ENCODE measurements at regions of chr10 and their contacts with region 1.

Region 1: GRCh38 chr10:91251430-91252056 is 31.1 kb downstream of the PCGF5 start:
- DNase-seq: peak; percentile 40 to 56
- ATAC-seq: peak; percentile 59 to 70; a peak in 3 of 6 replicates
- H3K4me3 ChIP-seq: no peak overlapping the region
- H3K27ac ChIP-seq: no peak overlapping the region
- H3K4me1 ChIP-seq: peaks cover 5% of the 10 kb centered on the region; the same call in 1 of the 3 replicates
- CTCF ChIP-seq: peak; percentile 97
- EP300 ChIP-seq: no peak
- POLR2A ChIP-seq: no peak
- RAD21 ChIP-seq: peak; percentile 97

Region 2: DNA sequence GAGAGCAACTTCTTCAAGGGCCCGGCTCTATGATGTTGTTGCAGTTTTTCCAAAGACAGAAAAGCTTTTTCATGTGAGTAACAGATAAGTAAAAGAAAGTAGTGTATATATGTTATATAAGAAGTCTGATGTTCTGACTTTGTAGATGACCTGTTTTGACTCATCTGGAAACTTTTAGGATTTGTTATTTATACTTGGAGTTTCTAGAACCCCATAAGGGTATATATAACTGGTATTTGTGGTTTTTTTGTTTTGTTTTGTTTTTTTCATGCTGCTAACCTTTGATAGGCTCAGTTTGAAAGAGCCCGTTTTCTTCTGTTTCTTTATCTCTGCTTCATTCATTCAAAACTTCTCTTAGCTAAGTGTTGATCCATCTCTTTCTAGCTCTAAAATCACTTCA is 372.5 kb before region 1 on chr10:
- CTCF ChIA-PET with region 1: interaction called, 13 read pairs
- POLR2A ChIA-PET with region 1: no interaction called
- DNase-seq: no peak
- ATAC-seq: no peak
- H3K4me3 ChIP-seq: no peak overlapping the region
- H3K27ac ChIP-seq: no peak overlapping the region
- H3K4me1 ChIP-seq: no peaks in the 10 kb centered on the region
- CTCF ChIP-seq: no peak
- EP300 ChIP-seq: no peak
- POLR2A ChIP-seq: no peak
- RAD21 ChIP-seq: no peak

Region 3: GRCh38 chr10:90905925-90906324 is 345.6 kb before region 1 on chr10:
- CTCF ChIA-PET with region 1: interaction called, 57 read pairs
- POLR2A ChIA-PET with region 1: no interaction called
- DNase-seq: no peak
- ATAC-seq: no peak
- H3K4me3 ChIP-seq: no peak overlapping the region
- H3K27ac ChIP-seq: no peak overlapping the region
- H3K4me1 ChIP-seq: no peaks in the 10 kb centered on the region
- CTCF ChIP-seq: no peak
- EP300 ChIP-seq: no peak
- POLR2A ChIP-seq: no peak
- RAD21 ChIP-seq: no peak

Region 4: GRCh38 chr10:91006001-91006751 is 245.4 kb before region 1 on chr10:
- CTCF ChIA-PET with region 1: interaction called, 28 read pairs
- POLR2A ChIA-PET with region 1: interaction called, 7 read pairs
- DNase-seq: peak; percentile 33 to 76
- ATAC-seq: peak; percentile 74 to 84; a peak in 5 of 6 replicates
- H3K4me3 ChIP-seq: no peak overlapping the region
- H3K27ac ChIP-seq: peak overlapping the region in 1 of 2 experiments; percentile 8; a peak in 1 of 6 replicates
- H3K4me1 ChIP-seq: peaks cover 11% of the 10 kb centered on the region
- CTCF ChIP-seq: peak; percentile 82
- EP300 ChIP-seq: no peak
- POLR2A ChIP-seq: no peak
- RAD21 ChIP-seq: peak; percentile 81 to 87

Region 5: DNA sequence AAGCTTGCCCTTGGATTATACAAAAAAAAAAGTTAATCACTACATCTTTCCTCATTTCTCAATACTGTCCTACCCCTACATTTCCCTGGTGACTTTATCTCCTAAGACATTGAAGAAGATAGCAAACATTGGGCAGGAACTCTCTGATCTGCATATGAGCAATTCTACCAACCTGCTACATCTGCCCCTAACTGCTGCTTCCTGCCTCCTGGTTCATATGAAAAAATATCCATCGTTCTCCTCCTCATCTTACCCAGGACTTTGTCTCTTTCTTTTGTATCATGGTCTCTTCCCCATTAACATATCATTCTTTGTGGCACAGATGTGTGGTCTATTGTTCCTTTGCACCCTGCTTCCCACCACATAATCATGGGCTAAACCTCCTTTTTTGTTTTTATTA is 170.8 kb before region 1 on chr10:
- CTCF ChIA-PET with region 1: interaction called, 10 read pairs
- POLR2A ChIA-PET with region 1: no interaction called
- DNase-seq: no peak
- ATAC-seq: no peak
- H3K4me3 ChIP-seq: no peak overlapping the region
- H3K27ac ChIP-seq: no peak overlapping the region
- H3K4me1 ChIP-seq: peaks cover 8% of the 10 kb centered on the region; the same call in 1 of the 3 replicates
- CTCF ChIP-seq: no peak
- EP300 ChIP-seq: no peak
- POLR2A ChIP-seq: no peak
- RAD21 ChIP-seq: no peak

Region 6: DNA sequence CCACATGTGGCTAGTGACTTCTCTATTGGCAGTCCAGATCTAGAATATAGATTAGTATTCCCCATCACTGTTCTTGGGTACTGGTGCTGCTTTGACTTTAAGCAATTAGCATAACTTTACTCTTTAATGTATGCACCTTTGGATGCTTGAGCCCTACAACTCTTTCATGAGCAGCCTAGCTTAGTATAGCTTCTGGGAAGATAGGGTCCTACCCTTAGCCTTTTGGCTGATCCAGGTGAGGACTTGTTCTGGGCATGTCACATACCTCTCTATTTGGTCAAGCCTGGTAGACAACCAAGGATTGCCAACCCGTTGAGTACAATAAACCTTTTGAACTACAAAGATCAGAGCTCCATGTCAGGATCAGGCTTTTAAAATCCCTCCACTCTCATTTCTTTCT is 13.4 kb before region 1 on chr10:
- CTCF ChIA-PET with region 1: interaction called, 11 read pairs
- POLR2A ChIA-PET with region 1: no interaction called
- DNase-seq: no peak
- ATAC-seq: no peak
- H3K4me3 ChIP-seq: no peak overlapping the region
- H3K27ac ChIP-seq: no peak overlapping the region
- H3K4me1 ChIP-seq: no peaks in the 10 kb centered on the region
- CTCF ChIP-seq: no peak
- EP300 ChIP-seq: no peak
- POLR2A ChIP-seq: no peak
- RAD21 ChIP-seq: no peak

Measured in A549 (cell line).